AG04450 (cell line): ENCODE measurements at regions of chr10 and their contacts with region 1.

Region 1: DNA sequence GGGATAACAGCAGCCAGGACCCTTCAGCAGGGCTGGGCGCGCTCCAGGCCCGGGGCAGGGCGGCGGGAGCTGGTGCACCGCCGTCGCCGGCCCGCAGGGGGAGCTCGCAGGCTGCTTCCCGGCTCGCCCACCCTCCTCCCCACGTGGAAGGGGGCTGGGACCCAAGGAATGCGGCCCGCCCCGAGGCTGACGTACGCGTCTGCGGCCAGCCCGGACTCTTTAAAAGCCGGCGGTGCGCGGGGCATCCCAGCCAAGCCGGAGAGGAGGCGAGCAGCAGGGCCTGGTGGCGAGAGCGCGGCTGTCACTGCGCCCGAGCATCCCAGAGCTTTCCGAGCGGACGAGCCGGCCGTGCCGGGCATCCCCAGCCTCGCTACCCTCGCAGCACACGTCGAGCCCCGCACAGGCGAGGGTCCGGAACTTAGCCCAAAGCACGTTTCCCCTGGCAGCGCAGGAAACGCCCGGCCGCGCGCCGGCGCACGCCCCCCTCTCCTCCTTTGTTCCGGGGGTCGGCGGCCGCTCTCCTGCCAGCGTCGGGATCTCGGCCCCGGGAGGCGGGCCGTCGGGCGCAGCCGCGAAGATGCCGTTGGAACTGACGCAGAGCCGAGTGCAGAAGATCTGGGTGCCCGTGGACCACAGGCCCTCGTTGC is at the start of gene PFKFB3:
- DNase-seq: peak; percentile 91
- H3K4me3 ChIP-seq: peak within 1 kb of the TSS; percentile 80
- H3K27ac ChIP-seq: peak within 1 kb of the TSS; percentile 90
- H3K27me3 ChIP-seq: no peaks in the 10 kb centered on the region
- CTCF ChIP-seq: peak; percentile 79
- polyA plus RNA-seq, gene PFKFB3: 24.3 and 26.6 TPM in 2 replicates

Region 2: GRCh38 chr10:6108603-6109443 is 94.0 kb before region 1 on chr10:
- CTCF ChIA-PET with region 1: interaction called, 12 read pairs
- POLR2A ChIA-PET with region 1: interaction called, 5 read pairs
- DNase-seq: no peak
- H3K4me3 ChIP-seq: no peak overlapping the region
- H3K27ac ChIP-seq: no peak overlapping the region
- H3K27me3 ChIP-seq: no peaks in the 10 kb centered on the region
- CTCF ChIP-seq: peak; percentile 74

Region 3: GRCh38 chr10:6163364-6164270 is 39.2 kb before region 1 on chr10:
- CTCF ChIA-PET with region 1: interaction called, 7 read pairs
- POLR2A ChIA-PET with region 1: interaction called, 17 read pairs
- DNase-seq: no peak
- H3K4me3 ChIP-seq: peak overlapping the region; percentile 78
- H3K27ac ChIP-seq: peak overlapping the region; percentile 47
- H3K27me3 ChIP-seq: no peaks in the 10 kb centered on the region
- CTCF ChIP-seq: no peak

Region 4: GRCh38 chr10:6382081-6382480 is 179.3 kb after region 1 on chr10:
- CTCF ChIA-PET with region 1: no interaction called
- POLR2A ChIA-PET with region 1: interaction called, 15 read pairs
- DNase-seq: peak; percentile 61
- H3K4me3 ChIP-seq: no peak overlapping the region
- H3K27ac ChIP-seq: peak overlapping the region; percentile 42
- H3K27me3 ChIP-seq: peaks cover 6% of the 10 kb centered on the region
- CTCF ChIP-seq: no peak

Region 5: DNA sequence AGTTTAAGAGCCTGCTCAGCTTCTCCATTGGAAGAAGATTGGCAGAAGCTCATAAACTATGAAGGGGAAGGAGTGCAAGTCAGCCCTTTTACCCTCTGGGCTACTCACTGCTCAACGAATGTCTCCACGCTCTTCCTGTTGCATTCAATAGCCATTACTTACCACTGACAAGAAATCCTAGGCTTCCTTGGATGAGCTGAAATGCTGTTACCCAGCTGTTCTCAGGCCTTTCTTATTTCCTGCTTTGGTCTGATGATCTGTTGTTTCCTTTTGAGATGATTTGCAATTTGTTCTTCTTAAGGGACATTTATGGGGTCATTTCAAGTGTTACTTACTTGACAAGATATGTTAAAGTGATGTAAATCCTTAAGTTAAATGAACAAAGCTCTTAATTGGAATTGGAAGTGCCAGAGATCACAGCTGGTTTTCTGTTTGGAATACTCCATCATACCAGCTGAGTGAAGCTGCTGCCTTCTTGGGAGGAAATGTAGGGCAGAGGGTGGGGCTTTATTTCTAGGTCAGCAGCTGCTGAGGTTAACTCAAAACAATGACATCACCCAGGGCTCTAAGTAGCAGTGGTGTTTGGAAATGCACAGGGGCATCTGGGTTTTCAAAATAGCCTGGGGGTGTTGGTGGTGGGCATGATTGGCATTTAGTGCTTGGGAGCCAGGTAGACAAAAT is 207.3 kb after region 1 on chr10:
- CTCF ChIA-PET with region 1: interaction called, 31 read pairs
- POLR2A ChIA-PET with region 1: interaction called, 5 read pairs
- DNase-seq: peak; percentile 50
- H3K4me3 ChIP-seq: no peak overlapping the region
- H3K27ac ChIP-seq: peak overlapping the region; percentile 21
- H3K27me3 ChIP-seq: peaks cover 7% of the 10 kb centered on the region
- CTCF ChIP-seq: no peak